Left lung (tissue), 14 donors: ENCODE measurements at regions of chr16 and their contacts with region 1.

Region 1: DNA sequence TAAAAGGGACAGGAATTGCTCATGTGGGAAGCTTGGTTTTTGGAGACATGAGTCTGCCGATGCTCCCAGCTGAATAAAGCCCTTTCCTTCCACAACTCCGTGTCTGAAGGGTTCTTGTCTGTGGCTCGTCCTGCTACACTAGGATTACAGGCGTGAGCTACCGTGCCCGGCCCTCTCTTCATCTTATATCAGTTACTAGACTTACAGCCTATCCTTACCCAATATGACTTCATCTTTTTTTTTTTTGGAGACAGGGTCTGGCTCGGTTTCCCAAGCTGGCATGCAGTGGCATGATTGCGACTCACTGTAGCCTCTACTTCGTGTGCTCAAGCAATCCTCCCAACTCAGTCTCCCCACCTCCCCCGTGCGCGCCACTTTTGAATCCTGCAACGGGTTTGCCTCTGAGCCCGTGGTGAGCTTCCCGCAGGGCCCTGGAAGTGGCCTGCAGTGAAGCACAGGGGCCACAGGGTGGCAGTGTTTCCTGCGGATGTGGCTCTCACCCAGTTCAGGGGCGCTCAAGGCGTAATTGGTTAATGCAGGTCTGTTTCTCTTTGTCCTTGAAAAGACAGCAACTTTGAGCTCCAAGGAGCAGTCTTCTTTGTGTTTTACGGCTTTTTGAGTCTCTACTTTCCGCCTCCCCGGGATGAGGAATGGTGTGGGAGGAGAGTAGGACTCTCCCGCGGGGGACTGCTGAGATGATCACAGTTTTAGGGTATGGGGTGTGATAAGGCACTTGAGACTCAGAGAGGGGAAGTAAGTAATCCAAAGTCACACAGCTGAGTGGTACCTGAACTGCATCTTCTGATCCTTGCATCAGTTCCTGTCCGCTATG is 22.7 kb upstream of the GPRC5B start:
- DNase-seq: peak; percentile 44 to 80 (median 60)
- ATAC-seq: peak; percentile 99
- H3K4me3 ChIP-seq: no peak overlapping the region
- H3K27ac ChIP-seq: no peak overlapping the region
- H3K4me1 ChIP-seq: no peaks in the 10 kb centered on the region
- H3K27me3 ChIP-seq: peaks cover 0 to 23% of the 10 kb centered on the region in 2 donors
- CTCF ChIP-seq: peak; percentile 91 to 93

Region 2: GRCh38 chr16:20298455-20298854 is 391.1 kb after region 1 on chr16:
- intact Hi-C with region 1: loop called in 1 of 2 experiments (anchors 5 kb)
- DNase-seq: no peak
- ATAC-seq: no peak
- H3K4me3 ChIP-seq: no peak overlapping the region
- H3K27ac ChIP-seq: no peak overlapping the region
- H3K4me1 ChIP-seq: no peaks in the 10 kb centered on the region
- H3K27me3 ChIP-seq: no peaks in the 10 kb centered on the region
- CTCF ChIP-seq: no peak